IMR-90 (cell line): ENCODE measurements at regions of chr1 and their contacts with region 1.

Region 1: GRCh38 chr1:182210417-182210816 is 148.9 kb upstream of the ZNF648 start:
- DNase-seq: no peak
- ATAC-seq: no peak
- H3K4me3 ChIP-seq: no peak overlapping the region
- H3K27ac ChIP-seq: no peak overlapping the region
- H3K4me1 ChIP-seq: no peaks in the 10 kb centered on the region
- H3K27me3 ChIP-seq: no peaks in the 10 kb centered on the region
- CTCF ChIP-seq: no peak
- POLR2A ChIP-seq: no peak
- RAD21 ChIP-seq: no peak

Region 2: DNA sequence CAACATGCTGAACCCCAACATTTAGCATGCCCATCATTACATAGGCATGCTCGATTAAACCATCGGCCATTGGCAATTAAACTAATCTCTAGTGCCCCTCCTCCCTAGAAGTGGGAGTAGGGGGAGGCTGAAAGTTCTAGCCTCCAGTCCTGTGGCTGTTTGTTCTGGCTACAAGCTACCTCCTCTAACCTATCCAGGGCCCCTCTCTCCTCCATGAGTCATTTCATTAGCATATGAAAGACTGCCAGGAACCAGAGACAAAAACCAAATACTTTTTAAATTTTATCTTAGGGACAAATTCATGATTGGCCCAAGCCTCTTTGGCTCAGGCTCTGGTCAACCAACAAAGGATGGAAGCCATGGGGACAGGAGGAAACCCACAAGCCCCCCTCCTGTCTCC is 496.0 kb before region 1 on chr1:
- CTCF ChIA-PET with region 1: no interaction called
- POLR2A ChIA-PET with region 1: interaction called, 17 read pairs
- dilution Hi-C with region 1: no loop called
- in situ Hi-C with region 1: no loop called
- intact Hi-C with region 1: no loop called
- DNase-seq: no peak
- ATAC-seq: no peak
- H3K4me3 ChIP-seq: no peak overlapping the region
- H3K27ac ChIP-seq: no peak overlapping the region
- H3K4me1 ChIP-seq: no peaks in the 10 kb centered on the region
- H3K27me3 ChIP-seq: no peaks in the 10 kb centered on the region
- CTCF ChIP-seq: no peak
- POLR2A ChIP-seq: no peak
- RAD21 ChIP-seq: no peak